Left ventricle myocardium superior (tissue), 1 donor: ENCODE measurements at regions of chr11 and their contacts with region 1.

Region 1: GRCh38 chr11:21289686-21290085 is 620.3 kb downstream of the NELL1 start:
- DNase-seq: no peak
- ATAC-seq: no peak

Region 2: GRCh38 chr11:21132146-21132720 is 157.5 kb before region 1 on chr11:
- intact Hi-C with region 1: loop called (anchors 10 kb)
- DNase-seq: no peak
- ATAC-seq: no peak

Region 3: DNA sequence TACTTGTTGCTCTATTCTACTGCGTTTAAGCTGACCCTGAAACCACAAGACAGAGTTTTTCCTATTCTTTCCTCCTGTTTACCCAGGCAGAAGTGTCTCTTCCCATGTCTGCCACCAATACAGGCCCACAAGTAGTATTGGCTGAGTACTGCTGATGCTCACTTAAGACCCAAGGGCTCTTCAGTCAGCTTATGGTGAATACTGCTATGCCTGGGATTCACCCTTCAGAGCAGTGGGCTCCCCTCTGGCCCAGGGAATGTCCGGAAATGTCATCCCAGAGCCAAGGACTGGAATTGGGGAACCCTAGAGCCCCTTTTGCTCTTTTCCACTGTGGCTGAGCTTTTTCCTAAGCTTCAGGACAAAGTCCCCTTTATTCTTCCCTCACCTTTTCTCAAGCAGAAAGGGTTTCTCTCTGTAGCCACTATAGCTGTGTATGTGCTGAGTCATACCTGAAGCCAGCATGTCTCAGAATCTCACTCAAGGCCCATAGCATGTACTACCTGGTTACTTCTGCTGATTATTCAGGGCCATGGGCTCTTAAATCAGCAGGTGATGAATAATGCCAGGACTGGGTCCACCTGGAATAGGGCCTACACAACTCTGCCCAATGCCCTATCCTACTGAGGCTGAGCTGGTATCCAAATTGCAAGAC is 157.4 kb after region 1 on chr11:
- intact Hi-C with region 1: no loop called
- DNase-seq: no peak
- ATAC-seq: no peak